GM10248 (cell line): ENCODE measurements at regions of chr12 and their contacts with region 1.

Region 1: GRCh38 chr12:43444940-43445564 is 107.0 kb downstream of the ADAMTS20 start:
- DNase-seq: peak; percentile 10
- CTCF ChIP-seq: peak; percentile 75

Region 2: DNA sequence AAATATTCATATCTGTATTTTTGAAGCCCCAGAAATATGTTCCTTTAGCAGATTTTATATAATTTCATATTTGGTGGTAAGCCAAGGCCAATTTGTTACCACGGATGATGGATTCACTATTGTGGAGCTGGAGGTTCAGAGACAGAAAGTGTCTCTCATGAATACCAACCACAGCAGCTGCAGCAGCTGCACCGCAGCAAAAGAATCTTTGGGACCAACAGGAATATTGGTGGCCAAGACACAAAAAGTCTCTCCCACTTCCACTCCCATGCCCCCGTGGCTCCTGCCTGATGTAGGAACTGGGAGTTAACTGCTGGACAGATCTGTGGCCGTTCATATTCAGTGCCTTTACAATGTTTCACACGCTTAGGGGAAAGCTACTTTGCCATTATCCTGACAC is 48.4 kb before region 1 on chr12:
- CTCF ChIA-PET with region 1: no interaction called
- POLR2A ChIA-PET with region 1: no interaction called
- DNase-seq: no peak
- CTCF ChIP-seq: no peak

Region 3: GRCh38 chr12:43428088-43428600 is 16.9 kb before region 1 on chr12:
- CTCF ChIA-PET with region 1: interaction called, 17 read pairs
- POLR2A ChIA-PET with region 1: no interaction called
- DNase-seq: no peak
- CTCF ChIP-seq: no peak

Region 4: DNA sequence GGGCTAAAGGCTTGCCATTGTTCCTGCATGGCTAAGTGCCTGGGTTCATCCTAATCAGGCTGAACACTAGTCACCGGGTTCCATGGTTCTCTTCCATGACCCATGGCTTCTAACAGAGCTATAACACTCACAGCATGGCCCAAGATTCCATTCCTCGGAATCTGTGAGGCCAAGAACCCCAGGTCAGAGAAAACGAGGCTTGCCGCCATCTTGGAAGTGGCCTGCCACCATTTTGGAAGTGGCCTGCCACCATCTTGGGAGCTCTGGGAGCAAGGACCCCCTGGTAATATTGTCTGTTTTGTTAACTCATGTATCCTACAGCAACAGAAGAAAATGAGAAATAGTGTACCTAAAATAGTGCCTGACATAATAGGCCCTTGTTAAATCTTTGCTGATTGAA is 14.2 kb after region 1 on chr12:
- CTCF ChIA-PET with region 1: interaction called, 19 read pairs
- POLR2A ChIA-PET with region 1: no interaction called
- DNase-seq: no peak
- CTCF ChIP-seq: no peak

Region 5: GRCh38 chr12:43586646-43587245 is 141.7 kb after region 1 on chr12:
- CTCF ChIA-PET with region 1: no interaction called
- POLR2A ChIA-PET with region 1: no interaction called
- DNase-seq: no peak
- CTCF ChIP-seq: no peak

Region 6: DNA sequence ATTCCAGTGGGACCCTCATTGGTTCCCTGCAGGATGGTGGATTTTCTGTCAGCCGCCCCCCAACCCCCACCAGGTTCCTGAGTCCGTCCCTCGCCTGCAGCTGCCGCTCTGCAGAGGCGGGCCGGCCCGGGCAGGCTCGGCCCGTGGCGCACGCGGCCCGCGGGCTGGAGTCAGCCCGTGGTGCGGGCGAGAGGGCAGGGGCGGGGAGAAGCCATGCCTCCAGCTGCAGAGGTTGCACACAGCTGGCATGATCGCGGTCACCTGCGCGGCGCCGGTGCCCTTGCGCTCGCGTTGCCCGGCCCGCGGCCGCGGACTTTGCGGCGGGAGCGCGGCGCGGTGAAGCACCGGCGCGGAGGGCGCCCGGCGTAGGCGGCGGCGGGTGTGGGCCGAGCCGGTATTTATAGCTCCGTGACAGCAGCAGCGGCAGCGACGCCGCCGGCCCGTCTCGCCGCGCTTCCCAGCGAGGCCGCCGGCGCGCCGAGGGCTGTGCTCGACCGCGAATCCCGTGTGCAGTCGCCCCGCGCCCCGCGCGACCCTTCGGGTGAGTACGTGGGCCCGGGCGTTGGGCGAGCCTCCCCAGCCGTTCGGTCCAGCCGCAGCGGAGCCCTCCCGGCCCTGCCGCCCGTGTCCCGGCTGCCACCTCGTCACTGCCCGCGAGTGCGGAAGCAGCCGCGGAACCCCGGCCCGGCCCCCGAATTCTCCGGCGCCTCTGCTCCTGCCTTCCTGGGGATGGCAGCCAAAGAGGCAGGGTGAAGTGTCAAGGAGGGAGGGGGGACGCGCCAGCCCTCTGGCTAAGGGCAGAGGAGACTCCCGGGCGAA is 390.8 kb after region 1 on chr12 and contains the start of gene TMEM117:
- CTCF ChIA-PET with region 1: no interaction called
- POLR2A ChIA-PET with region 1: no interaction called
- DNase-seq: peak; percentile 77
- CTCF ChIP-seq: no peak

Region 7: GRCh38 chr12:43858096-43858495 is 413.0 kb after region 1 on chr12:
- CTCF ChIA-PET with region 1: no interaction called
- POLR2A ChIA-PET with region 1: no interaction called
- DNase-seq: no peak
- CTCF ChIP-seq: no peak

Region 8: GRCh38 chr12:43882578-43883178 is 437.6 kb after region 1 on chr12:
- CTCF ChIA-PET with region 1: interaction called, 48 read pairs
- POLR2A ChIA-PET with region 1: no interaction called
- DNase-seq: peak; percentile 55
- CTCF ChIP-seq: peak; percentile 64